Naive thymus-derived CD8-positive, alpha-beta T cell (primary cell): ENCODE measurements at regions of chr7 and their contacts with region 1.

Region 1: DNA sequence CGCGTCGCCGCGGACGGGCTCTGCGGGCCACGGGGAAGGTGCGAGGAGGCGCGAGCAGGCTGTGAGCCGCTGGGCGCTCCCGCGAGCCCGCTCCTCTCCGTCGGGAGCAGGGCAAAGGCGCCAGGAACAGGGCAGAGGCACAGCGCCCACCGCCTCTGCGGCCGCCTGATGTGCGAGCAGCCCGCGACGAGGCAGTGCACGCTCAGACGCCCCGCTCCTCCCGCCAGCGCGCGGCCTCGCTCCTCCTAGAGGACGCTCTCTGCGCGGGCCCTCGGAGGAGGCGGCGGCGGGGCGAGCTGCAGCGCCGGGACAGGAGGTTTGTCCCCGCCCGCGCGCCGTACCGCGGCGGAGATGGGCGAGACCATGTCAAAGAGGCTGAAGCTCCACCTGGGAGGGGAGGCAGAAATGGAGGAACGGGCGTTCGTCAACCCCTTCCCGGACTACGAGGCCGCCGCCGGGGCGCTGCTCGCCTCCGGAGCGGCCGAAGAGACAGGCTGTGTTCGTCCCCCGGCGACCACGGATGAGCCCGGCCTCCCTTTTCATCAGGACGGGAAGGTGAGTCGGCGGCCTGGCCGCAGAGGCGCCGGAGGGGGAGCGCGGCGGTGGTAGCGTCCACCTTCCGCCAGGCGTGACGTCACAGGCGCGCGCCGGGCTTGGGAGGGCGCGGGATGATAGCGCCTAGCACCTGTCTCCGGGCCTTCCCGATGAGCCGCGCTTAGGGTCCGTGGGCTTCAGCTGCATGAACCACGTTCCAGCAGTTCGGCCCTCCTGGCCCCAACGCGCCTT is 731 bp downstream of the LANCL2 start:
- DNase-seq: peak; percentile 92 to 100 (median 96)
- ATAC-seq: peak; percentile 81 to 87
- H3K4me3 Mint-ChIP-seq: peak overlapping the region; percentile 89 to 97 (median 94)
- H3K27ac Mint-ChIP-seq: peak overlapping the region in 9 of 10 donors; percentile 98 to 99 (median 98)
- H3K4me1 Mint-ChIP-seq: peaks cover 23 to 40% (median 36%) of the 10 kb centered on the region in 4 donors
- H3K27me3 Mint-ChIP-seq: peaks cover 0 to 2% (median 0%) of the 10 kb centered on the region in 5 donors

Region 2: GRCh38 chr7:54758702-54759592 is 606.9 kb before region 1 on chr7 and contains the start of gene SEC61G:
- POLR2A ChIA-PET with region 1: interaction called, 17 read pairs
- DNase-seq: peak; percentile 86 to 97 (median 94)
- ATAC-seq: peak; percentile 96 to 97
- H3K4me3 Mint-ChIP-seq: peak within 1 kb of the TSS; percentile 95 to 100 (median 98)
- H3K27ac Mint-ChIP-seq: peak within 1 kb of the TSS; percentile 95 to 99 (median 96)
- H3K4me1 Mint-ChIP-seq: peaks cover 14 to 45% (median 38%) of the 10 kb centered on the region in 4 donors
- H3K27me3 Mint-ChIP-seq: peaks cover 0 to 5% (median 0%) of the 10 kb centered on the region in 5 donors
- polyA plus RNA-seq, gene SEC61G: 195 to 286 (median 235) TPM

Region 3: GRCh38 chr7:55271069-55271626 is 94.7 kb before region 1 on chr7:
- POLR2A ChIA-PET with region 1: no interaction called
- DNase-seq: no peak
- ATAC-seq: no peak
- H3K4me3 Mint-ChIP-seq: no peak overlapping the region
- H3K27ac Mint-ChIP-seq: no peak overlapping the region
- H3K4me1 Mint-ChIP-seq: no peaks in the 10 kb centered on the region
- H3K27me3 Mint-ChIP-seq: peaks cover 0 to 19% (median 3%) of the 10 kb centered on the region in 5 donors

Region 4: DNA sequence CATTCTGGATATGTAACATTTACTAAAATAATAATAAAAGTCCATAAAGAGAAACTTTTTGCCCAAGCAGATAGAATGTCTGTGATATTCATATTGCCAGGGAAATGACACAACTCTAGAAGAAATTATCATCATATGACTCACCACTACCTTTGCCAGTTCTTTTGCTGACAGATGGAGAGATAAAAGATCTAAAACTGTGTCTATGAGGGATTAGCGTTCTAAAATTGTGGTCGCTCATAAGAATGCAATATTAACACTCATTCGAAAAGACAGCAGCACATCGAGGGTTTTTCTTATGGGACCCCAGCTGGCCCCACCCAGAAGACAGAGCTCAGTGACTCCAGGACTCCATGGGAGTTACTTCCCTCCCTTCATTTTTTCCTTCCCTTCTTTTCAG is 17.4 kb before region 1 on chr7:
- POLR2A ChIA-PET with region 1: no interaction called
- DNase-seq: no peak
- ATAC-seq: no peak
- H3K4me3 Mint-ChIP-seq: no peak overlapping the region
- H3K27ac Mint-ChIP-seq: no peak overlapping the region
- H3K4me1 Mint-ChIP-seq: no peaks in the 10 kb centered on the region
- H3K27me3 Mint-ChIP-seq: peaks cover 4 to 42% (median 28%) of the 10 kb centered on the region in 5 donors

Region 5: GRCh38 chr7:55405856-55406541 is 40.1 kb after region 1 on chr7:
- POLR2A ChIA-PET with region 1: no interaction called
- DNase-seq: no peak
- ATAC-seq: no peak
- H3K4me3 Mint-ChIP-seq: no peak overlapping the region
- H3K27ac Mint-ChIP-seq: peak overlapping the region in 2 of 10 donors; percentile 37 to 69
- H3K4me1 Mint-ChIP-seq: no peaks in the 10 kb centered on the region
- H3K27me3 Mint-ChIP-seq: no peaks in the 10 kb centered on the region

Region 6: DNA sequence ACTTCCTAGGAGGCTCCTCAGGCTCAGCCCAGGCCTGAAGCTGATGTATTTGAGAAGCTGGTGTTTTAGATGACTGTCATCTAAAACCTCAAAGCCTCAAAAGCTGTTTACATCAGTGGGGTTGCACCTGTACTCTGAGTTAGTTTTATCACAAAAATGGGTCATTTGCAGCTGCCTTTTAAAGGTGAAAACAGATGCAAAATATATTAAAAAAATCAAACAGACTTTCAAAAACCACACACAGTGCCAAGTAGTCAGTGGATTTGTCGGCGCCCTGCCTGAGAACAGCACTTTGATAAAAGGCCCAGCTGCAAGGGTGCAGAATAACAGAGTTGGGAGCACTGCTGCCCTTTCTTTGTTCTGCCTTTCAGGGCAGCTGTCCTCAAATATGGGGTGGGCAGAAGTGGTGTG is 103.4 kb after region 1 on chr7:
- POLR2A ChIA-PET with region 1: interaction called, 17 read pairs
- DNase-seq: peak in 5 of 10 donors; percentile 29 to 80 (median 46)
- ATAC-seq: peak; percentile 78 to 80
- H3K4me3 Mint-ChIP-seq: peak overlapping the region; percentile 19 to 77 (median 52)
- H3K27ac Mint-ChIP-seq: peak overlapping the region; percentile 89 to 97 (median 94)
- H3K4me1 Mint-ChIP-seq: peaks cover 25 to 81% (median 68%) of the 10 kb centered on the region in 4 donors
- H3K27me3 Mint-ChIP-seq: no peaks in the 10 kb centered on the region

Region 7: DNA sequence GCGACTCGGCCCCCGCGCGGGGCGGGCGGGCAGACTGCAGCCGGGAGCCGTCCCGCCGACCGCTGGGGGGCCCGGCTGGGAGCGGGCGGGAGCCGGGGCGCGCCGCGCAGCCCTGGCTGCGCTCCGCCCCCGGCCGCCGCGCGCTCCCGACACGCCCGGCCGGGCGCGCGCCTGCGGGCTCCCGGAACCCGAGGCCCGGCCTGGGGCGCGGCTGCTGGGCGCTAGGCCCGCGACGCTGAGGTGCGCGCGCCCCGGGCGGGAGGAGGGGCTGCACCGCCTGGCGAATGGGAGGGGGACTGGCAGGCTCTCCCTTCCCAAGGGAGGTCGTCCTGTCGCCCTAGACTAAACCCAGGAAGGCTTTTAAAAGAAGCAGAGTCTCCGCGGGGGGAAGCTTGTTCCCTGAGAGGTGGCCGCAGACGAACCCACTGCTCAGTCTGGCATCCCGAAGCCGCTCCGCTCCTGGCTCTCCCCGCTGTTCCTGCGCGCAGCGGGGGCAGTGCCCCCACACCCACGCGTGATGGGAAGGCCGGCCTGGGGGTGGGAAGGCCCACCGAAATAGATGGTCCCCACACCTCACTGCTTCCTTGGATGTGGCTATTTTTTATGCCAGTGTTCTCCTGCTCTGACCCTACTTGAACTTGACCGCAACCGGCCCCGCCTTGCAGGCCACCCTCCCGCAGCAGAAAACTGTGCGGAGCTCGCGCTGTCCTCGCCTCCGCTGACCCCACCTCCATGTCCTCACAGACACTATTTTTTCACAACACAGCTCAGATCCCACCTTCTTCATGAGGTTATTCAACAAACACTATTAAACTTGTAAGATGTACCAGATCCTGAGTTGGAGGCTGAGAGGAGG is 206.7 kb after region 1 on chr7 and contains the start of gene VOPP1:
- POLR2A ChIA-PET with region 1: interaction called, 13 read pairs
- DNase-seq: peak in 9 of 10 donors; percentile 38 to 69 (median 58)
- ATAC-seq: peak; percentile 57 to 70
- H3K4me3 Mint-ChIP-seq: peak within 1 kb of the TSS; percentile 86 to 97 (median 94)
- H3K27ac Mint-ChIP-seq: peak within 1 kb of the TSS; percentile 85 to 96 (median 92)
- H3K4me1 Mint-ChIP-seq: peaks cover 32 to 56% (median 53%) of the 10 kb centered on the region in 4 donors
- H3K27me3 Mint-ChIP-seq: no peaks in the 10 kb centered on the region
- polyA plus RNA-seq, gene VOPP1: 19.5 to 31.5 (median 20.9) TPM